Posterior cingulate gyrus (tissue), 11 donors: ENCODE measurements at regions of chr2 and their contacts with region 1.

Region 1: GRCh38 chr2:179751163-179751809 is 110.1 kb downstream of the ZNF385B start:
- DNase-seq: no peak

Region 2: DNA sequence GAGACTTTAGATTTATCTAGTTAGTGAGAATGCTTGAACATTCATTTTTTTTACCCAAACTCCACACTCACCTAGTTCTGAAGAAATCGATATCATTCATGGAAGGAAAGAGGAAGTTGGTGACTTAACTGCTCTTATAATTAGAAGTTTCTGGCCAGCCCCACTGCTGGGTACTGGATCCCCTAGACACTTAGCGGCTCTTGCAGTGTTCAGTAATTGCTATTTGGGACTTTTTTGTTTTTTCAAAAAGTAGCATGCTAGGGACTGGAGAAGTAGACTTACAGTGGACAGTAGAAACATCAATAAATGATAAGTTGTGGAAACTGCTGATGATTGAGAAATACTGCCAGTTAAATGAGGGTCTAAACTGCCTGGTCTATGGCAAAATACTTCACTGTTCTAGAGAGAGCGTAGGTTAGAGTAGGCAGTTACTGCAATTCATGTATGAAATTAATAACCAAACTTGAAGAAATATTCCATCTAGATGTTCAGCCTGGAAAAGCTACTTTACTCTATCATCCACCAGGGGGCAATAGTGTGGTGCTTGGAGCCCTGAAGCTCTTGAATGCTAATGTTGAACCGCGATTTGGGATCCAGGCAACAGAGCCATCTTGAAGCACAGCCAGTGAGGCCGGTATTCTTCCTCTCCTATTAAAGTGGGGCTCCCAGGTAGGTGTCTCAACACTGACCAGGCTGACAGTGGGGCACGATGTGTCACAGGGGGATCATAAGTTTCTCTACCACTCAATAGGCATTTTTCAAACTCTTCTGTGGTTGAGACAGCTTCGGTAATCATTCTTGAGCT is 340.5 kb before region 1 on chr2:
- intact Hi-C with region 1: loop called (anchors 5 kb)
- DNase-seq: peak in 6 of 10 donors; percentile 19 to 78 (median 27)

Region 3: GRCh38 chr2:179422037-179422643 is 329.1 kb before region 1 on chr2:
- intact Hi-C with region 1: loop called (anchors 5 kb)
- DNase-seq: peak; percentile 41 to 95 (median 71)